ENCODE measurements at regions of chr10 and their contacts with region 1.

Region 1: DNA sequence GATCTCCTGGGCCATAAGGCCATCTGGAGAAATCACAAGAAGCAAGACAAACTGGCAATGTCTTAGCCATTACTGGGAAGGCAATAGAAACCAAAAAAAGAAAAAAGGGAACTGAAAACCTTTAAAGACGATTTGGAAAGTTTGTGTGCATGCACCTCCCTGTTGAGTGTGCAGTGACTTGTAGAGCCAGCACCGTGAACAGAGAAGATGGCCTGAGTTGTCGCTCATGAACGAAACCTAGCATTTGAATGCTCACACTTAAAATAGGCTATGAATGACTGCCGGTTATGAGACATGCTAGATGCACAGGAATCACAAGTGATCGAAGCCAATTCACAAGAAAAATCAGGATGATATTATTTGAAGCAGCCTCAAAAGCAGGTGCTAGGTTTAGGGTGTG is 151.3 kb upstream of the ADO start:
- DNase-seq: no peak
- H3K4me3 Mint-ChIP-seq: no peak overlapping the region
- H3K27ac Mint-ChIP-seq: no peak overlapping the region
- H3K4me1 Mint-ChIP-seq: peaks cover 42% of the 10 kb centered on the region
- H3K27me3 Mint-ChIP-seq: no peaks in the 10 kb centered on the region

Region 2: DNA sequence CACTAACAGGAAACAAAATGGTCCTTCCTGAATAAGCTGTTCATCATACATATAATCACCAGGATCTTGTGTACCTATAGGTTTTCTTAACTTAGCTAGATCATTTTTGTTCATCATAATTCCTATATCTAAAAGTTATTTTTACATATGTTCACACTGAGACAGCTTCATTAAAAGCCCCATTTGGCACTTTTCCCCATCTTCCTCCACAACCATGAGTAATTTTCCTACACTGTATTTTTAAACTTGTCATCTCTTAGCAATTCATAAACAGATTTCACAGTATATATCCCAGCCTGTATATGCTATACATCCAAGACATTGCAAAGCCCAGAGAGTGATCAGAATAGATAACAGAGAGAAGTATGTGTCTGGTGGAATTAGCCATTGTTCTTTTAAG is 250.7 kb before region 1 on chr10:
- intact Hi-C with region 1: no loop called
- DNase-seq: no peak
- H3K4me3 Mint-ChIP-seq: no peak overlapping the region
- H3K27ac Mint-ChIP-seq: no peak overlapping the region
- H3K4me1 Mint-ChIP-seq: no peaks in the 10 kb centered on the region
- H3K27me3 Mint-ChIP-seq: peaks cover 27% of the 10 kb centered on the region

Region 3: DNA sequence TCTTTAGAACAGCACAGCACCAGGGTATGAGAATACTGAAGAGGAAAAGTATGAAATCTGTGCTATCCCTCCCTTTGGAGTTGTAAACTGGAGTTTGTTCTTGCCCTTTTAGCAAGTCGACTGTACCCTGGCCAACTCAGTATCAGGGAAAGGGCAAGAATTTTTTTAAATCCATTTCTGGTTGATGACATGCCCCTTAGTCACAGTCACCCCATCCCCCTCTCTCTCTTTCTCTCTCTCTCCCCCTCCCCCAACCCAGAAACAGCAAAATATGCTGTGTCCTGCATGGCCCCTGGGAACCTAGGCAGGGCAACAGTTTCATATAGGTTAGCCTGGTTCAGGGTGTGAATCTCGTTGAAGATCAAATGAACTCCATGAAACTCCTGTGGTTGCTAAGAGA is 26.4 kb before region 1 on chr10:
- intact Hi-C with region 1: no loop called
- DNase-seq: no peak
- H3K4me3 Mint-ChIP-seq: peak overlapping the region; percentile 34
- H3K27ac Mint-ChIP-seq: peak overlapping the region; percentile 34
- H3K4me1 Mint-ChIP-seq: peaks cover 32% of the 10 kb centered on the region
- H3K27me3 Mint-ChIP-seq: no peaks in the 10 kb centered on the region

Region 4: DNA sequence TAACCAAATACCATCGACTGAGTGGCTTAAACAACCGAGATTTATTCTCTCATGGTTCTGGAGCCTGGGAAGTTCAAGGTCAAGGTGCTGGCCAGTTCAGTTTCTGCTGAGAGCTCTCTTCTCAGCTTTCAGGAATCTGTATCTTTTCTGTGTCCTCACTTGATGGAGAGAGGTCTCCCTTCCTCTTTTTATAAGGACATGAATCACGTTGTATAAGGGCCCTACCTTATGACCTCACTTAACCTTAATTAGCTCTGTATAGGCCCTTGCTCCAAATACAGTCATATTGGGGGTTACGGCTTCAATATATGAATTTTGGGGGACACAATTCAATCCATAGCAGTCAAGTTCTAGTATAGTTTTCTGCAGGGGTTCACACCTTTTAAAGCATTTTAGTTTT is 16.1 kb after region 1 on chr10:
- intact Hi-C with region 1: loop called (anchors 2 kb)
- DNase-seq: no peak
- H3K4me3 Mint-ChIP-seq: no peak overlapping the region
- H3K27ac Mint-ChIP-seq: no peak overlapping the region
- H3K4me1 Mint-ChIP-seq: peaks cover 15% of the 10 kb centered on the region
- H3K27me3 Mint-ChIP-seq: peaks cover 5% of the 10 kb centered on the region

Region 5: DNA sequence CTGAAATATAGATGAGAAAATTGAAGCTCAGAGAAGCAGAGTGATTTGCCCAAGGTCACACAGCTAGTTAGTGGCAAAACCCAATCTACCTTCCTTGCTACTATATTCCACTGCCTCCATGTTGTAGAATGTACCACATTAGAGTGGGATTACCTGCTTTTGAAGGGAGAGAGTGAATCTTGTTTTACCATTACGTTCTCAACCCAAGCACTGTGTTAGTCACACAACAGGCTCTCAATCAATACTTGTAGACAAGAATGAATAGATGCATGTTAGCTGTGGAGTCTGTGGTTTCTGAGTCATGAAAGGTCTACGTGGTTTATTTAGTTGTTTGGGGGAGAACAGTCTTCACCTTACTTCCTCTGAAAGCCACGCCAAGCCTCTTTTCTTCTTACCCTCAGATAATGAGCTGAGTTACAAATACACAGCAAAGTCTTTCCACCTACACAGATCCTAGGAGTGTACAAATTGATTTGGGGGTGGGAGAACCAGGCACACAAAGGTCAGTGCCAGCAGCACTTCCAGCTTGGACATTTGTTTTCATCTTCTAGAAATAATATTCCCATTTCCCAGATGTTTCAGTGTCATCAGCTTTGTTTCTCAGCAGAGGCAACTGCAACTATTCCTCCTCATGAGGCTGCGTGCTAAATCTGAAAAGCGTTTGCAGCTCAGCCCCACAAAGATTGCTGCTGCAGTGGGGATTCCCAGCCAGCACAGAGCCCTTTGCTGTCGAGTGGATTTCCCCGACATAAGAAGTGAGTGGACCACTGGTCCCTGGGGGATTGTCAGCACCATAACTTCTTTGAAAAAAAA is 79.8 kb after region 1 on chr10:
- intact Hi-C with region 1: no loop called
- DNase-seq: peak; percentile 51
- H3K4me3 Mint-ChIP-seq: peak overlapping the region; percentile 56
- H3K27ac Mint-ChIP-seq: no peak overlapping the region
- H3K4me1 Mint-ChIP-seq: peaks cover 23% of the 10 kb centered on the region
- H3K27me3 Mint-ChIP-seq: no peaks in the 10 kb centered on the region